ENCODE measurements at regions of chr15 and their contacts with region 1.

Region 1: GRCh38 chr15:51649659-51650521 is 27.3 kb upstream of the DMXL2 start:
- DNase-seq: peak; percentile 58
- H3K4me3 Mint-ChIP-seq: no peak overlapping the region
- H3K27ac Mint-ChIP-seq: no peak overlapping the region
- H3K4me1 Mint-ChIP-seq: no peaks in the 10 kb centered on the region
- H3K27me3 Mint-ChIP-seq: peaks cover 13% of the 10 kb centered on the region

Region 2: GRCh38 chr15:51668446-51668845 is 18.6 kb after region 1 on chr15:
- CTCF ChIA-PET with region 1: interaction called, 10 read pairs
- DNase-seq: no peak
- H3K4me3 Mint-ChIP-seq: no peak overlapping the region
- H3K27ac Mint-ChIP-seq: no peak overlapping the region
- H3K4me1 Mint-ChIP-seq: no peaks in the 10 kb centered on the region
- H3K27me3 Mint-ChIP-seq: peaks cover 25% of the 10 kb centered on the region

Region 3: DNA sequence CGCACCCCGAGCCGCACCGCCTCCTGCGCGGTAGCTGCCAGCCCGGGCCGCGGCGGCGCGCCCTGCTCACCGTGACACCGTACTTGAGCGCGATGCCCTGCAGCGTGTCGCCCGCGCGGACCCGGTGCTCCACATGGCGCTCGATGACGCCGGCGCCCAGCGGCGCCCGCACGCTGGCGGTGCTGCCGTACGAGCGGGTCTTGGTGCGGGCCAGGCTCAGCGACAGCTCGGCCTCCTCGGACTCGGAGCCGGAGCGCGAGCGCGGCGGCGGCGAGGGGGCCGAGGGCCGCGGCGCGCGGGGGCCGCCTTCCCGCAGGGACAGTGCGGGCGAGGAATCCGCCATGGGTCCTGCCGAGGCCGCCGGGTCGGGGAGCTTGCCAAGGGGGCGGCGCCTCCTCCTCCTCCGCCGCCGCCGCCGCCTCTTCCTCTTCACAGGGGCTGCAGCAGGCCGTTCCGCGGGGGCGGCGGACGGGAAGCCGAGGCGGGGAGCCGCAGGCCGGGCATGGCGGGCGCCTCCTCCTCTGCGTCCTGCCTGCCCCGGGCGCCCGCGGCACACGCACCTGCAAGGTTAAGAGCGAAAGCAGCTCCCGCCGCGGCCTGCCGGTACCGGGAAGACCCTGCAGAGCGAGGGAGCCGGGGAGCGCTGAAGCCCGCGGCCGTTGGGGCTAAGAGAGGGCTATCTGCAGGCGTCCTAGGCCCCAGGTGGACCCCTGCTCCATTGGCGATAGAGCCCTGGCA is 87.6 kb after region 1 on chr15 and contains the start of gene LYSMD2:
- CTCF ChIA-PET with region 1: interaction called, 21 read pairs
- DNase-seq: peak; percentile 76
- H3K4me3 Mint-ChIP-seq: peak within 1 kb of the TSS; percentile 84
- H3K27ac Mint-ChIP-seq: peak within 1 kb of the TSS; percentile 91
- H3K4me1 Mint-ChIP-seq: peaks cover 53% of the 10 kb centered on the region
- H3K27me3 Mint-ChIP-seq: no peaks in the 10 kb centered on the region

Region 4: DNA sequence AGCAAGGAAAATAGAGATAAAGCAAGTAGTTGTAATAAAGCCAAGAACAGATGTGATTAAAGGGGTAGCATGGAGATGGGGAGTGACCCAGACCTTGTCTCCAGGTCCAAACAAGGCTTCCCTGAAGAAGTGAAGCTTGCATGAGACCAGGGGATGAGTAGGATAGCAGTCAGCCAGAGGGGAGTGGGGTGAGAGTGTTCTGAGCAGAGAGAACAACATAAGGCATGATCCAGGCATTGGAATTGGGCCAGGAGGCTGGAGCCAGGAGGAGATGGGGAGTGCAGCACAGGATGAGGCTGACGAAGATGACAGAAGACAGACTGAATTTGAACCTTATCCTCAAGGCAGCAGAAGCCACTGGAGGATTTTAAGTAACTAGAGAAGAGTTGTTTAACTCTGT is 108.8 kb after region 1 on chr15:
- CTCF ChIA-PET with region 1: interaction called, 12 read pairs
- DNase-seq: no peak
- H3K4me3 Mint-ChIP-seq: no peak overlapping the region
- H3K27ac Mint-ChIP-seq: no peak overlapping the region
- H3K4me1 Mint-ChIP-seq: peaks cover 21% of the 10 kb centered on the region
- H3K27me3 Mint-ChIP-seq: peaks cover 1% of the 10 kb centered on the region